ENCODE measurements at regions of chr1 and their contacts with region 1.

Region 1: DNA sequence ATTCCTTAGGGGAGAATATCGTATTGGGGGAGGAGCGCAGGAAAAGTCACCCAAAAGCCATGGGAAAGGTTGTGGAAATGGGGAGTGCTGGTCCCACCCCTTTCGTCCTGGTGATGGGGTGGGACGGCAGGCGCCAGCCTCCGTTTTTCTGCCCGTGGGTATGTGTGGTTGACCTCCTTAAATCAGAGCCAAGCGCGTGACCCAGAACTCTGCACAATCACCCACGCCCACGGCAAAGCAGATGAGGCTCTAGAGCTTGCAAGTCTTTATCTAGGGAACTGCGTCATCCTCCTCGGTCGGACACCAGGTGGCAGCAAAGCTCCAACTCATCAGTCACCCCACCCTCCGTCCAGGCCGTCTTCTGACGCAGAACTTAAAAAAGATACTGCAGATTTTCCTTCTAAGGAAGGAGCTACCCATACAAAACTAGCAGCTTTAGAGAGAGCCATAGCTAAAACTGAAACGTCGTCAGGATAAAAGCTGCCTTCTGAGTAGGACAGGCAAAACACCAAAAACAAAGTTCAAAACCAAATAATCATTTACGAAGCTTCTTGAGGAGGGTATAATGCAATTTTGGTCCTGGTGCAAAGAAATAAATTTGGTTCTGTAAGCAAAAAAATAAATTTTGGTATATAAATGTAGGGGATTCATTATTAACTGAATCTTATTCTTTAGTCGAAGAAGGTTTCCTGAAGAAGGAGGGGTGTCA is 62.0 kb downstream of the TBX19 start:
- DNase-seq: peak; percentile 89
- ATAC-seq: peak; percentile 100
- H3K4me3 ChIP-seq: no peak overlapping the region
- H3K4me3 Mint-ChIP-seq: peak overlapping the region; percentile 48
- H3K27ac ChIP-seq: no peak overlapping the region
- H3K27ac Mint-ChIP-seq: peak overlapping the region; percentile 57
- H3K4me1 ChIP-seq: peaks cover 3 to 7% of the 10 kb centered on the region in 2 donors
- H3K4me1 Mint-ChIP-seq: peaks cover 6% of the 10 kb centered on the region
- H3K27me3 ChIP-seq: no peaks in the 10 kb centered on the region
- H3K27me3 Mint-ChIP-seq: peaks cover 5% of the 10 kb centered on the region
- CTCF ChIP-seq: peak; percentile 87

Region 2: DNA sequence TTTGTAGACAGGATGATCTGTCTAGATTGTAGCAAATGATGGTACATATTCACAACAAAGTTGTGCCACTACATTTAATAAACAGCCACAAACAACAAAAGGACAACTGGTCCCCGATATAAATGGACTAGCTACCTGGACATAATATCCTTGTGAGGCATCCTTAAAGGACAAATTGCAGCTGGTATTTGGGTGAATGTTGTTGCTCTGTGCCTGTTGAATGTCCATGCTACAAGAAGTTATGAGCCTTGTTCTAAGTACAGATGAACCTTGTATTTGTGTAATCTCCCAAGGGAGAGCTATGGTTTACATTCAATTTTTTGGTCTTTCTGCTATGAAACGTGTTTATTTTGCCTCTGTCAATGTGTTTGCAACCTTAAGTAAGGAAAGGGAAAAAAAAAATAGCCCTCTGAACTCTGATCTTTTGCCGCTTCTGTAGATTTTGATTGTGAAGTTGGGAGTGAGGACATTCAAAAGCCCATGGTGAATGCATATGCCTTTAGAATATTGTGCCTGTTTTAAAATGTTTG is 90.5 kb before region 1 on chr1:
- CTCF ChIA-PET with region 1: no interaction called
- POLR2A ChIA-PET with region 1: no interaction called
- intact Hi-C with region 1: no loop called
- DNase-seq: no peak
- ATAC-seq: no peak
- H3K4me3 ChIP-seq: no peak overlapping the region
- H3K4me3 Mint-ChIP-seq: no peak overlapping the region
- H3K27ac ChIP-seq: no peak overlapping the region
- H3K27ac Mint-ChIP-seq: no peak overlapping the region
- H3K4me1 ChIP-seq: no peaks in the 10 kb centered on the region
- H3K4me1 Mint-ChIP-seq: peaks cover 20% of the 10 kb centered on the region
- H3K27me3 ChIP-seq: no peaks in the 10 kb centered on the region
- H3K27me3 Mint-ChIP-seq: no peaks in the 10 kb centered on the region
- CTCF ChIP-seq: no peak

Region 3: GRCh38 chr1:168328731-168329399 is 13.9 kb before region 1 on chr1:
- CTCF ChIA-PET with region 1: interaction called, 22 read pairs
- POLR2A ChIA-PET with region 1: interaction called, 3 read pairs
- intact Hi-C with region 1: no loop called
- DNase-seq: no peak
- ATAC-seq: no peak
- H3K4me3 ChIP-seq: no peak overlapping the region
- H3K4me3 Mint-ChIP-seq: no peak overlapping the region
- H3K27ac ChIP-seq: no peak overlapping the region
- H3K27ac Mint-ChIP-seq: no peak overlapping the region
- H3K4me1 ChIP-seq: no peaks in the 10 kb centered on the region
- H3K4me1 Mint-ChIP-seq: no peaks in the 10 kb centered on the region
- H3K27me3 ChIP-seq: no peaks in the 10 kb centered on the region
- H3K27me3 Mint-ChIP-seq: no peaks in the 10 kb centered on the region
- CTCF ChIP-seq: no peak

Region 4: DNA sequence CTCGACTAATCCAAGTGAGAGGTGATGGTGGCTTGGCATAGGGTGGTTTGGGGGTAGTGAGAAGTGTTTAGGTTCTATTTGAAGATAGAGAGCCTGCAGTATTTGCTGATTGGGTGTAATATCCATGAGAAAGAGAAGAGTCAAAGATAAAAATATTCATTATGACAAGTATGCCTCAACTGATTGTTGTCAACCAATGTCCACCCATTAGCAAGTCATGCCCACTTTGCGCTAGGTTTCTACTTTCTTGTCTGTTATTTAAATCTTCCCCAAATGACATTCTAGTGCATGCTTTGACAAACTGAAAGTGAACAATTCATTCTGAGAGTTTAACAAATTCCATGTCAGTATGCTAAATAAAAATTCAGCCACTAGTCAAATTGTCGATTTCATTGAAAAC is 229.9 kb after region 1 on chr1:
- CTCF ChIA-PET with region 1: interaction called, 4 read pairs
- POLR2A ChIA-PET with region 1: no interaction called
- intact Hi-C with region 1: loop called (anchors 2 kb)
- DNase-seq: no peak
- ATAC-seq: no peak
- H3K4me3 ChIP-seq: no peak overlapping the region
- H3K4me3 Mint-ChIP-seq: no peak overlapping the region
- H3K27ac ChIP-seq: no peak overlapping the region
- H3K27ac Mint-ChIP-seq: no peak overlapping the region
- H3K4me1 ChIP-seq: no peaks in the 10 kb centered on the region
- H3K4me1 Mint-ChIP-seq: no peaks in the 10 kb centered on the region
- H3K27me3 ChIP-seq: no peaks in the 10 kb centered on the region
- H3K27me3 Mint-ChIP-seq: peaks cover 20% of the 10 kb centered on the region
- CTCF ChIP-seq: no peak

Region 5: DNA sequence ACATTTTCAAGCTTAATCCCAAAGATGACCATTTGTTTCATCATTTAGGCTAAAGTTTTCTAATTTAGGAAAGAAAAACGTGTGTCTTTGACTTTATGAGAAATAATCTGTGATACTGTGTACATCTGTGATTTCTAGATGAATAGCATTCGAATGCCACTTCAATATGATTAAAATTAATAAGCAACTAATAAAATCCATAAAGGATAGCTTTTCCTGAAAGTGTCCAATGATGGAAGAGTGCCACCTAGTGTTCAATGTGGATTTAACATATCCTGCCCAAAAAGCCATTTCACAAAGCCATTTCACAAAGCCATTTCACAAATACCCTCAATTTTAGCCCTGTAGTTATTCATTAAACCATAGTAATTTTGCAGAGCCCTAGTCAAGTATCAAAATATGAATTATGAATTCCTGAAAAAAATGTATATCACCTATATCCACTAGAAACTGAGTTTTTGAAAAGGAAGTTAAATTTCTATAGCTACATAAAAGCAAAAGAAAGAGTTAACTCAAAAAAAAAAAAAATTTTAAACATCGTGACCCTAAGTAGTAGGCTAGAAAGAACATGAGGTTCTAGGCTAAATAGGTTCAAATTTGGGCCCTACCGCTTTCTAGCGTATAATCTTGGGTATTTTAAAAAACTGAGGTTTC is 1005.8 kb after region 1 on chr1:
- CTCF ChIA-PET with region 1: interaction called, 257 read pairs
- POLR2A ChIA-PET with region 1: no interaction called
- intact Hi-C with region 1: loop called (anchors 1 kb)
- DNase-seq: peak; percentile 68
- ATAC-seq: no peak
- H3K4me3 ChIP-seq: no peak overlapping the region
- H3K4me3 Mint-ChIP-seq: no peak overlapping the region
- H3K27ac ChIP-seq: no peak overlapping the region
- H3K27ac Mint-ChIP-seq: no peak overlapping the region
- H3K4me1 ChIP-seq: no peaks in the 10 kb centered on the region
- H3K4me1 Mint-ChIP-seq: no peaks in the 10 kb centered on the region
- H3K27me3 ChIP-seq: no peaks in the 10 kb centered on the region
- H3K27me3 Mint-ChIP-seq: no peaks in the 10 kb centered on the region
- CTCF ChIP-seq: peak; percentile 90

Region 6: GRCh38 chr1:169794530-169795416 is 1452.0 kb after region 1 on chr1 and contains the start of gene METTL18:
- CTCF ChIA-PET with region 1: no interaction called
- POLR2A ChIA-PET with region 1: no interaction called
- intact Hi-C with region 1: loop called (anchors 10 kb)
- DNase-seq: peak; percentile 96
- ATAC-seq: peak; percentile 99
- H3K4me3 ChIP-seq: peak within 1 kb of the TSS; percentile 70 to 99 (median 94)
- H3K4me3 Mint-ChIP-seq: peak within 1 kb of the TSS; percentile 96
- H3K27ac ChIP-seq: peak within 1 kb of the TSS; percentile 72 to 91
- H3K27ac Mint-ChIP-seq: peak within 1 kb of the TSS; percentile 96
- H3K4me1 ChIP-seq: peaks cover 15 to 16% of the 10 kb centered on the region in 2 donors
- H3K4me1 Mint-ChIP-seq: peaks cover 45% of the 10 kb centered on the region
- H3K27me3 ChIP-seq: no peaks in the 10 kb centered on the region
- H3K27me3 Mint-ChIP-seq: no peaks in the 10 kb centered on the region
- CTCF ChIP-seq: no peak
- total RNA-seq, gene METTL18: 16.9 and 18.9 TPM in 2 replicates

Measured in B cell (primary cell).